CD8-positive, alpha-beta T cell (primary cell): ENCODE measurements at regions of chr12 and their contacts with region 1.

Region 1: GRCh38 chr12:77919450-77919849 is 88.8 kb downstream of the NAV3 start:
- DNase-seq: no peak
- ATAC-seq: no peak
- H3K4me3 ChIP-seq: no peak overlapping the region
- H3K4me3 Mint-ChIP-seq: no peak overlapping the region
- H3K27ac ChIP-seq: no peak overlapping the region
- H3K27ac Mint-ChIP-seq: no peak overlapping the region
- H3K4me1 ChIP-seq: no peaks in the 10 kb centered on the region
- H3K4me1 Mint-ChIP-seq: no peaks in the 10 kb centered on the region
- H3K27me3 ChIP-seq: no peaks in the 10 kb centered on the region
- H3K27me3 Mint-ChIP-seq: no peaks in the 10 kb centered on the region
- CTCF ChIP-seq: no peak

Region 2: DNA sequence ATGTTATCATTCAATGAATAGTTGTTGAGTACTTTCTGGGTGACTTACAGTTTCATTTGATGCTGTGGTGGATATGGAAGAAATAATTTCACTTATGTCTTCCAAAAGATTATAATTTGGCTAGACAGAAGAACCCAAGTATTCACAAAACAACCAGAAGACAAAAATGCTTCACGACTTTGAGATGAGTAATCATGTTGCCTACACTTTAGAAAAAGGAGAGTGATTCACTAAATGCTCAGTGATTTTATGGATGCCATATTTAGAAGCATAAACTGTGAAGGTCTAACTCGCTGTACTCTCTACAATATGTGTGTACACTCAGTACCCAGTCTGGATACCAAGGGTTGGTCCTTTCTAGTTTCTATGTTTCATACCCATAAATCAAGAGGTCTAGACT is 752.8 kb before region 1 on chr12:
- CTCF ChIA-PET with region 1: no interaction called
- POLR2A ChIA-PET with region 1: no interaction called
- intact Hi-C with region 1: loop called in 1 of 2 experiments (anchors 5 kb)
- DNase-seq: no peak
- ATAC-seq: no peak
- H3K4me3 ChIP-seq: no peak overlapping the region
- H3K4me3 Mint-ChIP-seq: no peak overlapping the region
- H3K27ac ChIP-seq: no peak overlapping the region
- H3K27ac Mint-ChIP-seq: no peak overlapping the region
- H3K4me1 ChIP-seq: no peaks in the 10 kb centered on the region
- H3K4me1 Mint-ChIP-seq: no peaks in the 10 kb centered on the region
- H3K27me3 ChIP-seq: no peaks in the 10 kb centered on the region
- H3K27me3 Mint-ChIP-seq: no peaks in the 10 kb centered on the region
- CTCF ChIP-seq: no peak

Region 3: DNA sequence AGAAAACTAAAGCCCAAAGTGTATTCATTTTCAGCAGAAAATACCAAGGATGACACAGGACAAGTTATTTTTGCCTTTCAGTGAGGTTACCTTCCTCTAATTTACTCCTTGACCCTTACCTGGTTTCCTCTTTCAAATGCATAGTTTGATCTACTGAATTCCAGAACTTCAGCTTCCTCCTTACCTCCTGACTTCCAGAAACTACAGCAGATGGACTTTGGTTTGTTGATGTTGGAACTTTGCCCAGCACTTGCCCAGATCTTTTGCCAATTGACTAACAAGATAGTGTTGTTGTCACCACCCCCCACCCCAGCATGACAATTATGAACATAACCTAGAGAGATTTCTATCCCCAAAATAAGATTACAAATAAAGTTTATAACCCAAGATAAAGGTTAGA is 25.5 kb before region 1 on chr12:
- CTCF ChIA-PET with region 1: no interaction called
- POLR2A ChIA-PET with region 1: no interaction called
- intact Hi-C with region 1: loop called in 1 of 2 experiments (anchors 2 kb)
- DNase-seq: no peak
- ATAC-seq: no peak
- H3K4me3 ChIP-seq: no peak overlapping the region
- H3K4me3 Mint-ChIP-seq: no peak overlapping the region
- H3K27ac ChIP-seq: no peak overlapping the region
- H3K27ac Mint-ChIP-seq: no peak overlapping the region
- H3K4me1 ChIP-seq: no peaks in the 10 kb centered on the region
- H3K4me1 Mint-ChIP-seq: no peaks in the 10 kb centered on the region
- H3K27me3 ChIP-seq: no peaks in the 10 kb centered on the region
- H3K27me3 Mint-ChIP-seq: no peaks in the 10 kb centered on the region
- CTCF ChIP-seq: no peak

Region 4: DNA sequence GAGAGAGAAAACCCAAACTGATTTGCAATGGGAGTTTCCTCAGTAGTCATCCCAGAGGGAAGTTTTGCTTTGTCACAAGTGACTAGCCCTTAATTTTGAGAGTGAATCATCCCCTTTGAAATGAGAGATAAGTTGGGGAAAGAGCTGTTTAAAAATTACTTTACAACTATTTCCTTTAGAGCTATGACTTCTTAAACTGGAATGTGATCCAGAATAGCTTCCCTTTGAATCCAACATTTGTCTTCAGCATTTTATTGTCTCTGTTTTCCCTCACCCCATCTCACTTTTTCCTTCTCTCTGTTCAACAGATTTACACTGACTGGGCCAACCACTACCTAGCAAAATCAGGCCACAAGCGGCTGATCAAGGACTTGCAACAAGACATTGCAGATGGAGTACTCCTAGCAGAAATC is 20.6 kb after region 1 on chr12:
- CTCF ChIA-PET with region 1: no interaction called
- POLR2A ChIA-PET with region 1: no interaction called
- intact Hi-C with region 1: no loop called
- DNase-seq: no peak
- ATAC-seq: no peak
- H3K4me3 ChIP-seq: no peak overlapping the region
- H3K4me3 Mint-ChIP-seq: no peak overlapping the region
- H3K27ac ChIP-seq: no peak overlapping the region
- H3K27ac Mint-ChIP-seq: no peak overlapping the region
- H3K4me1 ChIP-seq: no peaks in the 10 kb centered on the region
- H3K4me1 Mint-ChIP-seq: no peaks in the 10 kb centered on the region
- H3K27me3 ChIP-seq: no peaks in the 10 kb centered on the region
- H3K27me3 Mint-ChIP-seq: no peaks in the 10 kb centered on the region
- CTCF ChIP-seq: no peak